AG04449 (cell line): ENCODE measurements at regions of chr1 and their contacts with region 1.

Region 1: GRCh38 chr1:162056043-162056442 is 13.4 kb upstream of the NOS1AP start:
- DNase-seq: no peak
- H3K4me3 ChIP-seq: no peak overlapping the region
- CTCF ChIP-seq: peak; percentile 91

Region 2: DNA sequence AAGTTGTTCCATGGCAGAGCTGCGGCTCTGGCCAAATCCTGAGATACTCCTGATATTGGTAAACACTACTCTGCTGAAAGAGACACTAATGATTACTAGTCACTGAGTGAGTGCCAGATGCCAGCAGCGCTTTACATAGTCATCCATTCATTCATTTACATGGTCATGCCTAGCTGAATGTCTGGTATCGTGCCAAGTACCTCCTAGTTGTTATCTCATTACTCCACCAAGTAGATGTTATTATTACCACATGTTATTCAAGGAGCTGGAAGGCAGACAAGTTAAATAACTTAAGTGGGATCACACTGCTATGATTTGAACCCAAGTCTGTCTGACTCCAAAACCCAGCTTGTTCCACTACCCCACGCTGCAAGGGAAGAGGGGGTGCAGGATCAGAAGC is 37.0 kb before region 1 on chr1:
- CTCF ChIA-PET with region 1: no interaction called
- POLR2A ChIA-PET with region 1: no interaction called
- DNase-seq: peak; percentile 59
- H3K4me3 ChIP-seq: no peak overlapping the region
- CTCF ChIP-seq: no peak

Region 3: DNA sequence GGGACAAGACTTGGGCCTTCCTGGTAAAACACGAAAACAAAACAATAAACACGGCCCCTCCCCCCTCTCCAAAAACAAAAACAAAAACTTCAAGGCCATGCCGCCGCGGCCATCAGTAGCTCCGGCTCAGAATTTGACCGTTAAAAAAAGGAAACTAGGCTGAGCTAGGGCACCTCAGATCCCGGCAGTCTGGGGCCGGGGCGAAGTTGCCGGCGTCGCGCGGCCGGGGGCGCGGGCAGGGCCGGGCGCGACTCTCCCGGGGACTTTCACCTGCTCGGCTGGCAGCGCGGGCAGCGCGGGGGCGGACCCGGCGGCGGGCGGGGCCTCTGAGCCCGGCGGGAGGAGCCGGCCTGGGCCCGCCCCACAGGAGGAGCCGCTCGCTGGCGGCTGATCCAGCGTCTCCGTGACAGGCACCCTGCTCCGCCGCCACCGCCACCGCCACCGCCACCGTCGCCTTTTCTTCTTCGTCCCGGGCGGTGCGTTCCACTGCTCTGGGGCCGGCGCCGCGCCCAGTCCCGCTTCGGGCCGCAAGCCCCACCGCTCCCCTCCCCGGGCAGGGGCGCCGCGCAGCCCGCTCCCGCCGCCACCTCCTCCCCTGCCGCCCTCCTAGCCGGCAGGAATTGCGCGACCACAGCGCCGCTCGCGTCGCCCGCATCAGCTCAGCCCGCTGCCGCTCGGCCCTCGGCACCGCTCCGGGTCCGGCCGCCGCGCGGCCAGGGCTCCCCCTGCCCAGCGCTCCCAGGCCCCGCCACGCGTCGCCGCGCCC is 13.5 kb after region 1 on chr1 and contains the start of gene NOS1AP:
- CTCF ChIA-PET with region 1: interaction called, 10 read pairs
- POLR2A ChIA-PET with region 1: no interaction called
- DNase-seq: no peak
- H3K4me3 ChIP-seq: peak within 1 kb of the TSS; percentile 55
- CTCF ChIP-seq: no peak

Region 4: DNA sequence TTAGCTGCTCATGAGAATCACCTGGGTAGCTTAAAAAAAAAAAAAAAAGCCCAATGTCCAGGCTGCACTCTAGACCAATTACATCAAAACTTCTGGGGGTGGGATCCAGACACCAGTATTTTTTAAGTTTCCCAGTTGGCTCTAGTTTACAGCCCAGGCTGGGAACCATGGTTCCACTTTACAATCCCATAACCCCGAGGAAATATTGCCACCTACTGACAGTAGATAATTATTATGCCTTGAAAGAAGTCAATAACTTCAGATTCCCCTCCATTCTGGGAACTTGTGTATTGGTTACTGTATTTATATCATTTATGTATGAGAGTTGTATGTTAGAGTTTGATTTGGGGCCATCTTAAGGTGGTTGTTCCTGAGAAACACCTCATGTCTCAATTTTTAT is 220.4 kb after region 1 on chr1:
- CTCF ChIA-PET with region 1: interaction called, 47 read pairs
- POLR2A ChIA-PET with region 1: no interaction called
- DNase-seq: no peak
- H3K4me3 ChIP-seq: no peak overlapping the region
- CTCF ChIP-seq: peak; percentile 7

Region 5: DNA sequence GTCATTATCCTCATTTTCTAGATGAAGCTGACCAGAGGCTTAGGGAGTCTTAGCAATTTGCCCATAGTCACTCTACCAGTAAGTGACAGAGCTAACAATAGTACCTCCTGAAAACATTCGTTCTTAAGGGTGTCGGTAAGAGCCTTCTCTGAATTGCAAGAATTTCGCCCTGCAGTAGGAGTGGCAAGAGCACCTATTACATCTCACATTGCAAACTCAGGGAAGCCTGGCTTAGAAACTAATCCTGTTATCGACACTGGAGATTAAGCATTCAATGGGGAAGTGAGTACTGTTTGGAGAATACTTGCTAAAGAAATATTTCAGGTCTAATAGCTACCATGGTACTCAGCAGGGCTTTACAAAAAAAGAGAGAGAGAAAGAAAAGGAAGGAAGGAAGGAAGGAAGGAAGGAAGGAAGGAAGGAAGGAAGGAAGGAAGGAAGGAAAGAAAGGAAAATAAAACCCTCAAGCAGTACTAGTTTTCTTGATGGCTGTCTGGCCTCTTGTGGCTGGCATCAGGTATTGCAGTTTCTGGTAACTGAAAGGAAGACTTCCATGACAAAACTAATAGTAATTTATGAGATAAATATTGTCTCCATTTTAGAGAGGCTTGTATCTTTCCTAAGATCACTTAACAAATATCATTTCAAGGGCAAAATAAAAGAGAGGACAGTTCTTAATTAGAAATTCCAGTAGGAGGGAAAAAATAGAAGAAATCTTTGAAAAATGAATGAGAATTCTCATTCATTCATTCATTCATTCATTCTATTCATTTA is 335.9 kb after region 1 on chr1:
- CTCF ChIA-PET with region 1: interaction called, 38 read pairs
- POLR2A ChIA-PET with region 1: no interaction called
- DNase-seq: no peak
- H3K4me3 ChIP-seq: no peak overlapping the region
- CTCF ChIP-seq: peak; percentile 76